CD4-positive, alpha-beta T cell (primary cell): ENCODE measurements at regions of chr12 and their contacts with region 1.

Region 1: GRCh38 chr12:12837025-12837872 is 24.1 kb downstream of the DDX47 start:
- DNase-seq: peak in 11 of 14 experiments; percentile 5 to 68 (median 36)
- ATAC-seq: peak; percentile 72
- H3K4me3 ChIP-seq: no peak overlapping the region
- H3K4me3 Mint-ChIP-seq: peak overlapping the region; percentile 30
- H3K27ac ChIP-seq: no peak overlapping the region
- H3K27ac Mint-ChIP-seq: peak overlapping the region; percentile 92
- H3K4me1 ChIP-seq: peaks cover 4% of the 10 kb centered on the region
- H3K4me1 Mint-ChIP-seq: peaks cover 34% of the 10 kb centered on the region
- H3K27me3 ChIP-seq: no peaks in the 10 kb centered on the region
- H3K27me3 Mint-ChIP-seq: no peaks in the 10 kb centered on the region
- CTCF ChIP-seq: peak; percentile 69

Region 2: GRCh38 chr12:12859690-12860089 is 22.4 kb after region 1 on chr12:
- CTCF ChIA-PET with region 1: no interaction called
- POLR2A ChIA-PET with region 1: no interaction called
- intact Hi-C with region 1: no loop called
- DNase-seq: no peak
- ATAC-seq: no peak
- H3K4me3 ChIP-seq: no peak overlapping the region
- H3K4me3 Mint-ChIP-seq: no peak overlapping the region
- H3K27ac ChIP-seq: no peak overlapping the region
- H3K27ac Mint-ChIP-seq: no peak overlapping the region
- H3K4me1 ChIP-seq: no peaks in the 10 kb centered on the region
- H3K4me1 Mint-ChIP-seq: no peaks in the 10 kb centered on the region
- H3K27me3 ChIP-seq: no peaks in the 10 kb centered on the region
- H3K27me3 Mint-ChIP-seq: no peaks in the 10 kb centered on the region
- CTCF ChIP-seq: no peak

Region 3: DNA sequence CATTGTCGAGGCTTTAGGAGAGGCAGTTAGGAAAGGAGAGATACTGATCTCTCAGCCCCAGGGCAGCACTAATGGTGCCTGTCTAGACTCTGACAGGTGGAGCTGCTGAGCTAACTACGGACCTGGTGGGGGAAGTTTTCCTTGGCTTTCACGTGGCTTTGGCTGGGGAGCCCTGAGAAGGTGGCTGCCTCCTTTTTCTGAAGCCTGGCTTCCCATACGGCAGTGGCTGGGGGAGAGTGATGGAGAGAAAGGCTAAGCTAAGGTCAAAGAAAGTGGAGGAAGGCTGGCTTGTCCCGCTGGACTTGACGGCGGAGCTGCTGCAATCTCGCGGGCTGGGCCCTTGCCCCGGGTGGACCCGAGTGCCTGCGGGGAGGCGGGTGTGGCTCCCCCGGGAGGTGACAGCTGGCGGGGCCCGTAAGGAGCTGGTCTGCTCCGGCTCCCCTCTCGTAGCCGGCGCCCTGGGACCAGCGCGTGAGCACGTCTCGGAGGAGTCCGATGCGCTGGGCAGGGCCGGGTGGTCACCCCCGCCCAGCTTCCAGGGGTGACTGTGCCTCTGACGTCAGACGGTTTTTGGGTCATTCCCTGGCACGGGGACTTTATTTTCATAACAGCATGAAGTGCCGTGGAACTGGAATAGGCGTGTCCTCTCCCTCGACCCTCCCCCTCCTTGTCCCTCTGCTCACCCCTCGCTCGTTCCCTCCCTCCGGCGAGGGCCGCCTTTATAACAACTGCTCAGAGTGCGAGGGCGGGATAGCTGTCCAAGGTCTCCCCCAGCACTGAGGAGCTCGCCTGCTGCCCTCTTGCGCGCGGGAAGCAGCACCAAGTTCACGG is 53.8 kb after region 1 on chr12 and contains the start of gene GPRC5A:
- CTCF ChIA-PET with region 1: no interaction called
- POLR2A ChIA-PET with region 1: interaction called, 6 read pairs
- intact Hi-C with region 1: loop called (anchors 2 to 5 kb)
- DNase-seq: peak in 13 of 14 experiments; percentile 7 to 61 (median 22)
- ATAC-seq: peak; percentile 66
- H3K4me3 ChIP-seq: peak within 1 kb of the TSS; percentile 55
- H3K4me3 Mint-ChIP-seq: peak within 1 kb of the TSS; percentile 89
- H3K27ac ChIP-seq: no peak within 1 kb of the TSS
- H3K27ac Mint-ChIP-seq: peak within 1 kb of the TSS; percentile 34
- H3K4me1 ChIP-seq: peaks cover 14% of the 10 kb centered on the region
- H3K4me1 Mint-ChIP-seq: peaks cover 19% of the 10 kb centered on the region
- H3K27me3 ChIP-seq: peaks cover 20 to 25% of the 10 kb centered on the region in 2 experiments
- H3K27me3 Mint-ChIP-seq: peaks cover 26% of the 10 kb centered on the region
- CTCF ChIP-seq: no peak
- total RNA-seq, gene GPRC5A: 0.14 to 0.47 TPM

Region 4: GRCh38 chr12:12909228-12909994 is 72.2 kb after region 1 on chr12:
- CTCF ChIA-PET with region 1: interaction called, 3 read pairs
- POLR2A ChIA-PET with region 1: no interaction called
- intact Hi-C with region 1: loop called in 1 of 2 experiments (anchors 5 kb)
- DNase-seq: no peak
- ATAC-seq: no peak
- H3K4me3 ChIP-seq: no peak overlapping the region
- H3K4me3 Mint-ChIP-seq: no peak overlapping the region
- H3K27ac ChIP-seq: no peak overlapping the region
- H3K27ac Mint-ChIP-seq: peak overlapping the region; percentile 64
- H3K4me1 ChIP-seq: peaks cover 19% of the 10 kb centered on the region
- H3K4me1 Mint-ChIP-seq: peaks cover 28% of the 10 kb centered on the region
- H3K27me3 ChIP-seq: peaks cover 0 to 8% of the 10 kb centered on the region in 2 experiments
- H3K27me3 Mint-ChIP-seq: no peaks in the 10 kb centered on the region
- CTCF ChIP-seq: no peak

Region 5: GRCh38 chr12:12983420-12984035 is 146.3 kb after region 1 on chr12:
- CTCF ChIA-PET with region 1: no interaction called
- POLR2A ChIA-PET with region 1: no interaction called
- intact Hi-C with region 1: loop called (anchors 1 to 2 kb)
- DNase-seq: peak in 4 of 14 experiments; percentile 16 to 41 (median 30)
- ATAC-seq: peak; percentile 44
- H3K4me3 ChIP-seq: no peak overlapping the region
- H3K4me3 Mint-ChIP-seq: no peak overlapping the region
- H3K27ac ChIP-seq: no peak overlapping the region
- H3K27ac Mint-ChIP-seq: no peak overlapping the region
- H3K4me1 ChIP-seq: no peaks in the 10 kb centered on the region
- H3K4me1 Mint-ChIP-seq: no peaks in the 10 kb centered on the region
- H3K27me3 ChIP-seq: no peaks in the 10 kb centered on the region
- H3K27me3 Mint-ChIP-seq: no peaks in the 10 kb centered on the region
- CTCF ChIP-seq: peak; percentile 59